CD14-positive monocyte (primary cell): ENCODE measurements at regions of chr6 and their contacts with region 1.

Region 1: GRCh38 chr6:41787219-41787917 is at the start of gene TOMM6:
- DNase-seq: peak; percentile 92 to 93 (median 93)
- H3K4me3 ChIP-seq: peak within 1 kb of the TSS; percentile 78 to 99 (median 83)
- H3K4me3 Mint-ChIP-seq: peak within 1 kb of the TSS; percentile 88 to 94
- H3K27ac ChIP-seq: peak within 1 kb of the TSS; percentile 82 to 86
- H3K27ac Mint-ChIP-seq: peak within 1 kb of the TSS; percentile 93 to 97 (median 95)
- H3K4me1 ChIP-seq: peaks cover 30 to 58% of the 10 kb centered on the region in 2 donors
- H3K4me1 Mint-ChIP-seq: peaks cover 32% of the 10 kb centered on the region
- H3K27me3 ChIP-seq: no peaks in the 10 kb centered on the region
- H3K27me3 Mint-ChIP-seq: peaks cover 0 to 5% (median 4%) of the 10 kb centered on the region in 3 donors
- CTCF ChIP-seq: peak; percentile 87
- polyA plus RNA-seq, gene TOMM6: 271 to 382 (median 343) TPM

Region 2: GRCh38 chr6:41747256-41748101 is 39.9 kb before region 1 on chr6 and contains the start of gene PGC:
- intact Hi-C with region 1: no loop called
- DNase-seq: no peak
- H3K4me3 ChIP-seq: no peak within 1 kb of the TSS
- H3K4me3 Mint-ChIP-seq: no peak within 1 kb of the TSS
- H3K27ac ChIP-seq: no peak within 1 kb of the TSS
- H3K27ac Mint-ChIP-seq: no peak within 1 kb of the TSS
- H3K4me1 ChIP-seq: no peaks in the 10 kb centered on the region
- H3K4me1 Mint-ChIP-seq: peaks cover 5% of the 10 kb centered on the region
- H3K27me3 ChIP-seq: no peaks in the 10 kb centered on the region
- H3K27me3 Mint-ChIP-seq: peaks cover 0 to 4% (median 0%) of the 10 kb centered on the region in 3 donors
- CTCF ChIP-seq: no peak
- polyA plus RNA-seq, gene PGC: not detected

Region 3: GRCh38 chr6:41859356-41859755 is 72.0 kb after region 1 on chr6:
- intact Hi-C with region 1: no loop called
- DNase-seq: no peak
- H3K4me3 ChIP-seq: no peak overlapping the region
- H3K4me3 Mint-ChIP-seq: no peak overlapping the region
- H3K27ac ChIP-seq: no peak overlapping the region
- H3K27ac Mint-ChIP-seq: no peak overlapping the region
- H3K4me1 ChIP-seq: no peaks in the 10 kb centered on the region
- H3K4me1 Mint-ChIP-seq: no peaks in the 10 kb centered on the region
- H3K27me3 ChIP-seq: no peaks in the 10 kb centered on the region
- H3K27me3 Mint-ChIP-seq: no peaks in the 10 kb centered on the region
- CTCF ChIP-seq: no peak

Region 4: GRCh38 chr6:41895300-41896233 is 108.2 kb after region 1 on chr6 and contains the start of gene USP49:
- intact Hi-C with region 1: loop called (anchors 5 to 10 kb)
- DNase-seq: peak; percentile 85 to 96 (median 86)
- H3K4me3 ChIP-seq: peak within 1 kb of the TSS; percentile 85 to 95 (median 87)
- H3K4me3 Mint-ChIP-seq: peak within 1 kb of the TSS in 1 of 2 donors; percentile 94
- H3K27ac ChIP-seq: peak within 1 kb of the TSS; percentile 89 to 95
- H3K27ac Mint-ChIP-seq: peak within 1 kb of the TSS in 6 of 7 donors; percentile 90 to 97 (median 94)
- H3K4me1 ChIP-seq: peaks cover 18 to 24% of the 10 kb centered on the region in 2 donors
- H3K4me1 Mint-ChIP-seq: peaks cover 13% of the 10 kb centered on the region
- H3K27me3 ChIP-seq: peaks cover 2 to 5% of the 10 kb centered on the region in 2 donors
- H3K27me3 Mint-ChIP-seq: no peaks in the 10 kb centered on the region
- CTCF ChIP-seq: no peak
- polyA plus RNA-seq, gene USP49: 0.08 to 4.8 (median 0.37) TPM

Region 5: GRCh38 chr6:41920921-41921711 is 133.7 kb after region 1 on chr6 and contains the starts of genes BYSL and MED20:
- intact Hi-C with region 1: loop called (anchors 2 to 5 kb)
- DNase-seq: peak; percentile 96 to 99 (median 97)
- H3K4me3 ChIP-seq: peak within 1 kb of the TSS; percentile 78 to 91 (median 81)
- H3K4me3 Mint-ChIP-seq: peak within 1 kb of the TSS; percentile 98 to 100
- H3K27ac ChIP-seq: peak within 1 kb of the TSS; percentile 90 to 92
- H3K27ac Mint-ChIP-seq: peak within 1 kb of the TSS; percentile 98 to 100 (median 100)
- H3K4me1 ChIP-seq: peaks cover 28 to 42% of the 10 kb centered on the region in 2 donors
- H3K4me1 Mint-ChIP-seq: peaks cover 38% of the 10 kb centered on the region
- H3K27me3 ChIP-seq: no peaks in the 10 kb centered on the region
- H3K27me3 Mint-ChIP-seq: peaks cover 0 to 6% (median 1%) of the 10 kb centered on the region in 3 donors
- CTCF ChIP-seq: peak; percentile 99
- polyA plus RNA-seq, gene BYSL: 2.7 to 4.2 (median 3.9) TPM
- polyA plus RNA-seq, gene MED20: 6.3 to 16.2 (median 13.6) TPM

Region 6: GRCh38 chr6:42050266-42051032 is 263.1 kb after region 1 on chr6 and contains the start of gene TAF8:
- intact Hi-C with region 1: loop called (anchors 2 to 5 kb)
- DNase-seq: peak; percentile 80 to 85 (median 82)
- H3K4me3 ChIP-seq: peak within 1 kb of the TSS; percentile 83 to 95 (median 87)
- H3K4me3 Mint-ChIP-seq: peak within 1 kb of the TSS; percentile 94 to 97
- H3K27ac ChIP-seq: peak within 1 kb of the TSS; percentile 86 to 88
- H3K27ac Mint-ChIP-seq: peak within 1 kb of the TSS; percentile 93 to 99 (median 98)
- H3K4me1 ChIP-seq: peaks cover 51 to 61% of the 10 kb centered on the region in 2 donors
- H3K4me1 Mint-ChIP-seq: peaks cover 54% of the 10 kb centered on the region
- H3K27me3 ChIP-seq: peaks cover 0 to 8% of the 10 kb centered on the region in 2 donors
- H3K27me3 Mint-ChIP-seq: peaks cover 7 to 28% (median 11%) of the 10 kb centered on the region in 3 donors
- CTCF ChIP-seq: no peak
- polyA plus RNA-seq, gene TAF8: 13.1 to 24.7 (median 16.6) TPM

Region 7: DNA sequence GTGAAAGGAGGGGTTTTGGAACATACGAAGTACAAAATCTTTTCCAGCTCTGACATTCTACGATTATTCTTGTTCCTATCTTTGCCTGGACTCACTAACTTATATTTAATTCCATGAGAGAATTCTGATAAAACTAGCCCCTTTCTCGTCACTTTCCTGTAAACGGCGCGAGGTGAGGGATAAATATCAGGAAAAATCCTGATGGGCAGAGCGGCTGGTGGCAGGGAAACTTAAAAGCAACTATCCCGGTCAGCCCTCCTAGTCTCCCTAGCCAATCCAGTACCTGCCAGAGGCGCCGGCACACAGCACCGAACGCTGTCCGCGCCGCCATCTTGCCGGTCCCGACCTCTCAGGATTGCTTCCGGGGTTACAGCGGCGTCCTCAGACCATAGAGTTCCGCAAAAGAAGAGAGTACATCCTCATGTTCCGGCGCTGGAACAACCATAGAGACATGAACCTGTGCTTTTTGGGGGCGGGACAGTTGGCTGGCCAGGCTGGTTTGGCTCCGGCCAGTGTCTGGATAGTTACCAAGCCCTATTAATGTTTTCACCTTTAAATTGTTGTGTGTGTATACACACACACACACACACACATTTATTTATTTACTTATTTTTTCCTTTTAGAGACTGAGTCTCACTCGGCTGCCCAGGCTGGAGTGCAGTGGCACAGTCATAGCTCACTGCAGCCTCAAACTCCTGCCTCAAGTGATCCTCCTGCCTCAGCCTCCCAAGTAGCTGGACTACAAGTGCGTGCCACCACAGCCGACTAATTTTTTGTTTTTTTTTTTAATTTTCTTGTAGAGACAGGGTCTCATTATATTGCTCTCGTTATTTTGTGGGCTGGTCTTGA is 430.4 kb after region 1 on chr6 and contains the start of gene MRPS10:
- intact Hi-C with region 1: loop called in 1 of 2 experiments (anchors 10 kb)
- DNase-seq: peak; percentile 90 to 91 (median 90)
- H3K4me3 ChIP-seq: peak within 1 kb of the TSS; percentile 81 to 97 (median 95)
- H3K4me3 Mint-ChIP-seq: peak within 1 kb of the TSS; percentile 91 to 96
- H3K27ac ChIP-seq: peak within 1 kb of the TSS; percentile 64 to 86
- H3K27ac Mint-ChIP-seq: peak within 1 kb of the TSS; percentile 92 to 98 (median 96)
- H3K4me1 ChIP-seq: peaks cover 12% of the 10 kb centered on the region in 2 donors
- H3K4me1 Mint-ChIP-seq: peaks cover 13% of the 10 kb centered on the region
- H3K27me3 ChIP-seq: no peaks in the 10 kb centered on the region
- H3K27me3 Mint-ChIP-seq: no peaks in the 10 kb centered on the region
- CTCF ChIP-seq: no peak
- polyA plus RNA-seq, gene MRPS10: 9.2 to 33.0 (median 31.4) TPM